ENCODE measurements at regions of chr7 and their contacts with region 1.

Region 1: GRCh38 chr7:108598153-108598552 is 28.5 kb downstream of the DNAJB9 start:
- DNase-seq: no peak
- ATAC-seq: no peak
- H3K4me3 ChIP-seq: no peak overlapping the region
- H3K4me3 Mint-ChIP-seq: no peak overlapping the region
- H3K27ac ChIP-seq: no peak overlapping the region
- H3K27ac Mint-ChIP-seq: no peak overlapping the region
- H3K4me1 ChIP-seq: no peaks in the 10 kb centered on the region
- H3K4me1 Mint-ChIP-seq: no peaks in the 10 kb centered on the region
- H3K27me3 ChIP-seq: no peaks in the 10 kb centered on the region
- H3K27me3 Mint-ChIP-seq: peaks cover 12% of the 10 kb centered on the region
- CTCF ChIP-seq: no peak

Region 2: GRCh38 chr7:108181073-108181985 is 416.8 kb before region 1 on chr7:
- CTCF ChIA-PET with region 1: no interaction called
- POLR2A ChIA-PET with region 1: no interaction called
- intact Hi-C with region 1: loop called (anchors 1 to 5 kb)
- DNase-seq: peak in 3 of 14 experiments; percentile 40 to 65 (median 59)
- ATAC-seq: peak; percentile 62
- H3K4me3 ChIP-seq: no peak overlapping the region
- H3K4me3 Mint-ChIP-seq: no peak overlapping the region
- H3K27ac ChIP-seq: no peak overlapping the region
- H3K27ac Mint-ChIP-seq: no peak overlapping the region
- H3K4me1 ChIP-seq: no peaks in the 10 kb centered on the region
- H3K4me1 Mint-ChIP-seq: no peaks in the 10 kb centered on the region
- H3K27me3 ChIP-seq: no peaks in the 10 kb centered on the region
- H3K27me3 Mint-ChIP-seq: peaks cover 5% of the 10 kb centered on the region
- CTCF ChIP-seq: peak; percentile 87